ENCODE measurements at regions of chr17 and their contacts with region 1.

Region 1: DNA sequence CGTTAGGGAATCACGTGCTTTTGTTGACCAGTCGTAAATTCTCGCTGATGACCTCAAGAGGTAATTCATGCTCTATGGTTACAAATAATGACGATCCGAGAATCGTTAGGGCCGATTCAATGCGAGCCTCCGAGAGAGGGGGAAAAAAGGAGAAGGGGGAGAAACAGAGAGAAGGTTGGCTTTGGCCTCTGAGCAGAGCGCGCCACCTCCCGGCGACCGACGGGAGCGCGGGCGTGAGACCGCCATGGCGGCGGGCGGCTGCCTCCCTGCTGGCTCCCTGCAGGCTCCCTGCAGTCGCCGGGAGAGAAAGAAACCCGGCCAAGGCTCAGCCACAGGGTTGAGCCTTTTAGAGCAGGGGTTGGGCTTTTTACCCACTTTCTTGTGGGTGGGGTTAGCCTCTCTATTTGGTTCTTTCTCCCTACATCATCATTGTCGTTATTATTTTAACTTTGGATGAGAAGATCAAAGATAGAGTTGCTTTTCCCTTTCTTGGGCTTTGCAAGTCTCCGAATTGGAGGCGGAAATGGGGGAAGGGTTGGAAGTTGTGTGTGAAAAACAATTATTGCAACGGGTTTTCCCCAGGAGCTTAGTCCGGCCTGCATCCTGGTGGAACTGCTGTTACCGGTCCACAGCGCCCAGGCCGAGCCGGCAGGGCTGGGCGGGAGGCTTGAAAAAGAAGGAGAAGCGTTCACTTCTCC is 410 bp upstream of the HOXB5 start:
- DNase-seq: peak; percentile 89
- CTCF ChIP-seq: peak; percentile 92

Region 2: DNA sequence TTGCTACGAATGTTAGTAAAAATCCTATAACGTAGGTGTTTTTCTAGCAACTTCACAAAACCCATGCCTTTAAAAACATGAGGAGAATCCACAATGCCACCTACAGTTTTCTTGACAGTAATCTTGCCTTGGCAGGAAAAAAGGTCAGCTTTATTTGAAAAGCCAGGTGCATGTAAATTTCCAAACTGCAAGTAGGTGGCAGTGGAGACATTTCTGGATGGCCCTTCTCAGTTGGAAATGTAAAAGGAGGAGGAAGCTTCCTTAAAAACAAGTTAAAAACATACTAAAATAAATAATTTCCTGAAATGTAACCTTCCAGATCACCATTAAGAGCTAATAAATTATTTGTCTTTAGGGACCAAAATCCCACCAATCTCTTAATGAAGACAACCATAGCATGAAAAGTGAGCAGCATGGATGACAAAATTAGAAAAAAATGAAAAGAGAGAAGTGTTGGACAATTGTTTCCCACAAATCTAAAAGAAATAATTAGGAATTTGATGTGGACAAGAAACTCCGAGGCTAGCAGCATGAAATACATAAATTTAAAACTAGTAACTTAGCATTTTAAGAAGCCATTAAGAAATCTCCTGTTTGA is 334.2 kb before region 1 on chr17:
- CTCF ChIA-PET with region 1: interaction called, 30 read pairs
- POLR2A ChIA-PET with region 1: no interaction called
- DNase-seq: no peak
- CTCF ChIP-seq: peak; percentile 45

Region 3: DNA sequence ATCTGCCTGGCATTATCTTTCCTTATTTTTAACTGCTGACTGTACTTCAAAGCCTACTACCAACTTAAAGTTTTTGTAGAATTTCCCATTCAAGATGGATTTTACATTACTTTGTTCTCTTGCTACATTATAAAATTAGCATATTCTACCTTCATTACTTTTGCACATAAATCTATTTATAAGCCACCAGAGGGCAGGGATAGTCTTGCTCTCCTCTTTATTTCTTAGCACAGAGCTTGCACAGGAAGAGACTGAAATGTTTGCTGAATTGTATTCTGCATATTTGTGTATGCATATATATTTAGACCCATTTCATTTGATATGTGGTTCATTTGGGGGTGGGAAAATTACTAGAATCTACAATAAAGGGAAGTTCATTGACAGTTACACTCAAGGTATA is 271.9 kb before region 1 on chr17:
- CTCF ChIA-PET with region 1: interaction called, 11 read pairs
- POLR2A ChIA-PET with region 1: no interaction called
- DNase-seq: no peak
- CTCF ChIP-seq: no peak

Region 4: DNA sequence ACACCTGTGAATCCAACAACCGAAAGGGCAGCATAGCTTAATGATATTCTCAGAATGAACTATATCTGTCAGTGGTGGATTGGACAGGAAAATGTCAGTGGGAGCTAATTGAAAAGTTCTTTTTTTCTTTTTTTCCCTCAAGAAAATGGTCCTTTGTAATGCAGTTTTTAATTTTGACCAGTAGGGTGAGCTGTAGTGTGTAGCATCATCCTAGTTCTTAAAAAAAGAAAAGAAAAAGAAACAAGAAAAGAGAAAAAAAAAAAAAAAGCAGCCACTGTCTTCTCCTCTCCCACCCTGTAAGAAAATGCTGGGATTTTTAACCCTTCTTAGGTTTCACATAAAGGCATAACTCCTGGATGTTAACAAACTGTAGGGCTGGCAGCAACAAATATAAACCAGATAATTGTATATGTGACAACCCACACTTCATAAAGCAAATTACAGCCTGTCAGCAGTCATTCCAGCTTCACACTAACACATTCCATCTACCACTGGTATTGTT is 242.1 kb before region 1 on chr17:
- CTCF ChIA-PET with region 1: interaction called, 30 read pairs
- POLR2A ChIA-PET with region 1: no interaction called
- DNase-seq: peak; percentile 36
- CTCF ChIP-seq: peak; percentile 62

Region 5: GRCh38 chr17:48500966-48501426 is 93.0 kb before region 1 on chr17:
- CTCF ChIA-PET with region 1: interaction called, 11 read pairs
- POLR2A ChIA-PET with region 1: no interaction called
- DNase-seq: no peak
- CTCF ChIP-seq: peak; percentile 22

Region 6: GRCh38 chr17:48618256-48618897 is 24.4 kb after region 1 on chr17:
- CTCF ChIA-PET with region 1: interaction called, 15 read pairs
- POLR2A ChIA-PET with region 1: interaction called, 8 read pairs
- DNase-seq: peak; percentile 90
- CTCF ChIP-seq: peak; percentile 99

Measured in GM10248 (cell line).